ENCODE measurements at regions of chr11 and their contacts with region 1.

Region 1: DNA sequence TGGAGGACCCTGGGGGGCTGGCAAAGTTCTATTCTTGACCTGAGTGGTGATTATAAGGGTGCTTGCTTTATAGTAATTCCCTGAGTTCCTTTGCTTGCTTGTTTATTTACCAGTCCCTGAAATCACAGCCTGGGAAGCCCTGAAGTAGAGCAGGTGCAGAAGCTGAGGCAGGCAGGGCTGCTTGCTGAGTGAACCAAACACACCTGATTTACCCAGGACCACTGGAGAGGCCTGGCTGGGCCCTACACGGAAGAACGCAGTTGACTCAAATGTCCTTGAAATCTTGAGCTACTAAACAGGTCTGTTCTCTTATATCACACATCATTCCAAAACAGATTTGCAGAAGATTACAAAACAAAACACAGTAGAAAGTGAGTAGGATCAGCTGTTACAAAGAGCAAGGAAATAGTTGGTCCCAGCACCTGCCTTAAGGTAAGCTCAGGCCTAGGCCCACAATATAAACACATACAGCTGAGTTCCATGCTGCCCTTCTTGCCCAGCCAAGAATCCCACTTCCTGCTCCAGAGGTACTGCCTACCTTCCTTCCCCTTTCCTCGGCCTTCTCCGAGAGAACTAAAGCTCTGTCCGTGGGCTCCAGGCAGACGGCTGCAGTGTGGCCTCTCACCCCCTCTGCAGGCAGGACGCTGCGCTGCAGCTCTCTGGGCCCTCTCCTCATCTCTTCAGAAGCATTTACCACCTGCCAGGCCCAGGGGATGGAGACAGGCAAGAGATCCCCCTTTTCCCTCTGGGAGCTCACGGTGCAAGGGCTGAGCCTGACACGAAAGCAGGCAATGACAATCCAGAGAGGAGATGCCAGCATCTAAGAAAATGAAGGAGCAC is 46.1 kb upstream of the SCUBE2 start:
- DNase-seq: peak; percentile 56 to 76
- ATAC-seq: peak; percentile 82 to 99 (median 98)
- H3K4me3 ChIP-seq: no peak overlapping the region
- H3K4me3 Mint-ChIP-seq: no peak overlapping the region
- H3K27ac ChIP-seq: no peak overlapping the region
- H3K27ac Mint-ChIP-seq: no peak overlapping the region
- H3K4me1 ChIP-seq: no peaks in the 10 kb centered on the region
- H3K4me1 Mint-ChIP-seq: peaks cover 0 to 6% of the 10 kb centered on the region in 2 donors
- H3K27me3 ChIP-seq: no peaks in the 10 kb centered on the region
- H3K27me3 Mint-ChIP-seq: no peaks in the 10 kb centered on the region
- CTCF ChIP-seq: peak; percentile 81

Region 2: GRCh38 chr11:9015677-9016076 is 121.8 kb before region 1 on chr11:
- intact Hi-C with region 1: loop called (anchors 5 kb)
- DNase-seq: peak; percentile 24 to 81
- ATAC-seq: peak; percentile 70 to 90 (median 87)
- H3K4me3 ChIP-seq: no peak overlapping the region
- H3K4me3 Mint-ChIP-seq: no peak overlapping the region
- H3K27ac ChIP-seq: no peak overlapping the region
- H3K27ac Mint-ChIP-seq: no peak overlapping the region
- H3K4me1 ChIP-seq: no peaks in the 10 kb centered on the region
- H3K4me1 Mint-ChIP-seq: no peaks in the 10 kb centered on the region
- H3K27me3 ChIP-seq: no peaks in the 10 kb centered on the region
- H3K27me3 Mint-ChIP-seq: peaks cover 12 to 24% of the 10 kb centered on the region in 2 donors
- CTCF ChIP-seq: peak; percentile 75

Measured in natural killer cell (primary cell).